Naive thymus-derived CD4-positive, alpha-beta T cell (primary cell): ENCODE measurements at regions of chr2 and their contacts with region 1.

Region 1: DNA sequence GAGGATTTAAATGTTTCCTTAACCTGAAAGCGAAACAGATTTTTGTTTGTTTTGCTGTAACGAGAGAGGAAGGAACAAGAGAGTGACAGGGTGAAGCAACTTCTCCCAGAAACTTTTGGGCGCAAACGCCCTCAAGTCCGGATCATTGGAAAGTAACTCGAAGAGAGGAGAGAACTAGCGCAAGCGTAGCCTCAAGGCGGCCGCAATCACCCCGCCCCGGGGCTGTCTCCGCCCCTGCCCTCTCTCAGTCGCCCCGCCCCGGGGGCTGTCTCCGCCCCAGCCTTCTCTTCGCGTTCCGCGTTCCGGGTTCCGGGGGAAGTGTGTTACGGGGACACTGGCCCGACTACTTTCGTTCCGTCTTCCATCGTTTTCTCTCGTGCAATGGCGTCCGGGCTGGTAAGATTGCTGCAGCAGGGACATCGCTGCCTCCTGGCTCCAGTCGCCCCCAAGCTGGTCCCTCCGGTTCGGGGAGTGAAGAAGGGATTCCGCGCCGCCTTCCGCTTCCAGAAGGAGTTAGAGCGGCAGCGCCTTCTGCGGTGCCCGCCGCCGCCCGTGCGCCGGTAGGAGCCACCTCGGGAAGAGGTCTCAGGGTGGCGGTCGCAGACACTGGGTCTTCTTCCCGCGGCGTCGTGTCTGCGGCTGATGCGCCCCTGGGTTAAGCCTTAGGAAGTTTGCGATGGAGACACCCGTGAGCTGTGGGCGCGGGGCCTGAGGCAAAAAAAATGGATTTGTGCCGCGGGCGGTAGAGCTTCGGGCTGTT is at the start of gene MRPL44:
- DNase-seq: peak; percentile 92 to 99 (median 96)
- ATAC-seq: peak; percentile 100
- H3K4me3 ChIP-seq: peak within 1 kb of the TSS; percentile 90
- H3K4me3 Mint-ChIP-seq: peak within 1 kb of the TSS; percentile 90 to 97 (median 94)
- H3K27ac ChIP-seq: peak within 1 kb of the TSS; percentile 81
- H3K27ac Mint-ChIP-seq: peak within 1 kb of the TSS; percentile 78 to 98 (median 95)
- H3K4me1 ChIP-seq: peaks cover 40 to 48% of the 10 kb centered on the region in 2 donors
- H3K4me1 Mint-ChIP-seq: peaks cover 33 to 70% (median 58%) of the 10 kb centered on the region in 7 donors
- H3K27me3 ChIP-seq: no peaks in the 10 kb centered on the region
- H3K27me3 Mint-ChIP-seq: no peaks in the 10 kb centered on the region
- total RNA-seq, gene MRPL44: 18.0 to 31.2 (median 26.8) TPM

Region 2: DNA sequence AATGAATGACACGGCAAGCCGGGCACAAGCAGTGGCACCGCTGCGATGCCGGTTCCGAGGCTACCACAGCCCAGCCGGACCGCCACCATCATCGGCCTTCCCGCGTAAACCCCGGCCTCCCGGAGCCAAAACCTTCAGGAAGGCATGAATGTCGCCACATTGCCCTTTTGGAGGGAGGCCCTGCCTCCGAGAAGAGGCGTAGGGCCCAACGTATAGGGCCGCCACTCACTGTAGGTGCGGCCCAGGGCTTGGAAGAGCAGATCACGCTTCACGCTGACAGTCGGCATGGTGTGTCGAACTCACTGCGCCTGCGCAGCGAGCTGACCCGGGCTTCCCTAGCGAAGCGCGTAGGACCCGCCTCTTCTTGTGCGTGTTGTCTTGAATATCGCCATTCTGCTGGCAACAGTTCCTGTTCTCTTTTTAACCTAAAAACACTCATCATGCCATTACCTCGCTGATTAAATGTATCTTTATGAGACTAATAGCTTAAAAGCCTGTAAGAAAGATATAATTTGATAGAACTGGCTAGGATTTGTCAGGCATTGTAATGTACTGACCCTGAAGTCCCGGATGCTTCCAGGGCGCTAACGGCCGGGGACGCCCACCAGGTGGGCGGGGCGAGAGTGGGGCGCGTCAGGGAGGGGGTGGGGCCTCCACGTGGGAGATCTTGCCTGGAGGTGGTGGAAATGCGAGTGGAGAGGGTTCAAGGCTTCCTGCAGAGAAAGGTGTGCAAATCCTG is 1301.3 kb before region 1 on chr2 and contains the start of gene FARSB:
- CTCF ChIA-PET with region 1: no interaction called
- POLR2A ChIA-PET with region 1: no interaction called
- intact Hi-C with region 1: loop called in 1 of 2 experiments (anchors 5 kb)
- DNase-seq: peak; percentile 86 to 98 (median 94)
- ATAC-seq: peak; percentile 96
- H3K4me3 ChIP-seq: peak within 1 kb of the TSS; percentile 82
- H3K4me3 Mint-ChIP-seq: peak within 1 kb of the TSS; percentile 95 to 100 (median 99)
- H3K27ac ChIP-seq: peak within 1 kb of the TSS; percentile 94
- H3K27ac Mint-ChIP-seq: peak within 1 kb of the TSS; percentile 98 to 100 (median 99)
- H3K4me1 ChIP-seq: peaks cover 18 to 20% of the 10 kb centered on the region in 2 donors
- H3K4me1 Mint-ChIP-seq: peaks cover 30 to 59% (median 45%) of the 10 kb centered on the region in 7 donors
- H3K27me3 ChIP-seq: no peaks in the 10 kb centered on the region
- H3K27me3 Mint-ChIP-seq: no peaks in the 10 kb centered on the region
- total RNA-seq, gene FARSB: 10.5 to 23.3 (median 13.8) TPM

Region 3: GRCh38 chr2:223837287-223838061 is 119.8 kb before region 1 on chr2 and contains the start of gene AP1S3:
- CTCF ChIA-PET with region 1: interaction called, 3 read pairs
- POLR2A ChIA-PET with region 1: no interaction called
- intact Hi-C with region 1: loop called (anchors 1 to 2 kb)
- DNase-seq: peak; percentile 30 to 75 (median 58)
- ATAC-seq: peak; percentile 88
- H3K4me3 ChIP-seq: peak within 1 kb of the TSS; percentile 69
- H3K4me3 Mint-ChIP-seq: peak within 1 kb of the TSS; percentile 87 to 97 (median 94)
- H3K27ac ChIP-seq: peak within 1 kb of the TSS; percentile 60
- H3K27ac Mint-ChIP-seq: peak within 1 kb of the TSS; percentile 36 to 84 (median 76)
- H3K4me1 ChIP-seq: no peaks in the 10 kb centered on the region
- H3K4me1 Mint-ChIP-seq: peaks cover 0 to 20% (median 12%) of the 10 kb centered on the region in 7 donors
- H3K27me3 ChIP-seq: no peaks in the 10 kb centered on the region
- H3K27me3 Mint-ChIP-seq: no peaks in the 10 kb centered on the region
- total RNA-seq, gene AP1S3: 0.54 to 8.2 (median 1.6) TPM

Region 4: DNA sequence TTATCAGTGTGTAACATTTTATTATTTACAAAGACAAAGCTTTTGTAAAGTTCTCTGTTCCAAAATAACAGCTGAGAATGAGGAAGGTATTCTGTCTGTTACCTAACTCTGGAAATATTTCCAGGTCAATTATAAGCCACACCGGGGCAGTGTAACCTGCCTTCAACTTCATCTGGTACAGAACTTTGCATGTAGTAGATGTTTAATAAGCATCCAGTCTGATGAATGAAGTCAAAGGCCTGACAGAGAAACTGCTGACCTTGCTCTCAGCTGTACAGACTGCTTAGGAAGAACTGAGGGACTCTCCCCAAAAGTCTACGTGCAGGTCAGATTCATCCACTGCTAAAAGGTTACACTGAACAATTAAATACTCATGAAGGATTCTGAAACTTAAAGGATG is 55.4 kb before region 1 on chr2:
- CTCF ChIA-PET with region 1: no interaction called
- POLR2A ChIA-PET with region 1: no interaction called
- intact Hi-C with region 1: no loop called
- DNase-seq: no peak
- ATAC-seq: no peak
- H3K4me3 ChIP-seq: no peak overlapping the region
- H3K4me3 Mint-ChIP-seq: no peak overlapping the region
- H3K27ac ChIP-seq: no peak overlapping the region
- H3K27ac Mint-ChIP-seq: no peak overlapping the region
- H3K4me1 ChIP-seq: no peaks in the 10 kb centered on the region
- H3K4me1 Mint-ChIP-seq: peaks cover 0 to 12% (median 0%) of the 10 kb centered on the region in 7 donors
- H3K27me3 ChIP-seq: no peaks in the 10 kb centered on the region
- H3K27me3 Mint-ChIP-seq: no peaks in the 10 kb centered on the region

Region 5: DNA sequence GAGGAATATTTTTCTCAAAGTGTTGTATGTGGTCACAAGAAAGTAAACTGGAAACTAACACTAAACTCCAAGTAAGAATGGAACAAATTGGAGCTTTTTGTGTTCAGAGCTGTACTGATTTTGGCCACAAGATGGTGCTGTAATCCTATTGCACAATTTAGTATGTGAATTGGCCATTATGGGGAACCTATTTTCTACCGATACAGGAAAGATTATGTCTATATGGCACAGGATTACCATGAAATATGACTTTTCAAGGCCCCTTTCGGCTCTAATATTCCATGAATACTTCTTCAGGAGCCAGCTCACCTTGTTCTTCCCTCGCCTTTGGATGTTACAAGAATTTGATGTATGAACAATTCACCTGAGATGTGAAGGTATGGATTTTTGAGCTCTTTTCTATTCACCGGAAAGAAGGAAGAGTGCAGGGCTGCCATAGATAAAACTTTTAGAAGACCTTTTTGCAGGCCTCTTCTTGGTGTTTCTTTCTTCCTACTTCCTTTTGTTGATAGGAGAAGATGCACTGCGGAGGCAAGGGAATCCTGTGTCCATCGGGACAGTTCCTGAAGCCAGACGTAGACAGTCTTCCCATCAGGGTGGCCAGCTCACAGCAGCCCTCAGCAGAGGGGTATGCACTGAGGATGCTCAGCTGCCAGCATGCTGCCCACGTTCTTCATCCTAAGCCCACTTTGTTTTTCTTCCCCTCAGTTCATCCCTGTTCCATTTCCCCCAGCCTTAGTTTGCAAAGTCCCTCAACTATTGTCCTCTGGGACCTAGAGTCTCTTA is 13.3 kb after region 1 on chr2:
- CTCF ChIA-PET with region 1: interaction called, 22 read pairs
- POLR2A ChIA-PET with region 1: interaction called, 10 read pairs
- intact Hi-C with region 1: no loop called
- DNase-seq: peak in 8 of 9 donors; percentile 27 to 62 (median 54)
- ATAC-seq: peak; percentile 87
- H3K4me3 ChIP-seq: no peak overlapping the region
- H3K4me3 Mint-ChIP-seq: no peak overlapping the region
- H3K27ac ChIP-seq: no peak overlapping the region
- H3K27ac Mint-ChIP-seq: peak overlapping the region in 1 of 9 donors; percentile 28
- H3K4me1 ChIP-seq: no peaks in the 10 kb centered on the region
- H3K4me1 Mint-ChIP-seq: peaks cover 0 to 14% (median 4%) of the 10 kb centered on the region in 7 donors
- H3K27me3 ChIP-seq: no peaks in the 10 kb centered on the region
- H3K27me3 Mint-ChIP-seq: no peaks in the 10 kb centered on the region

Region 6: GRCh38 chr2:224650815-224651439 is 693.7 kb after region 1 on chr2:
- CTCF ChIA-PET with region 1: no interaction called
- POLR2A ChIA-PET with region 1: no interaction called
- intact Hi-C with region 1: loop called in 1 of 2 experiments (anchors 1 kb)
- DNase-seq: peak in 7 of 9 donors; percentile 12 to 57 (median 47)
- ATAC-seq: peak; percentile 72
- H3K4me3 ChIP-seq: no peak overlapping the region
- H3K4me3 Mint-ChIP-seq: no peak overlapping the region
- H3K27ac ChIP-seq: no peak overlapping the region
- H3K27ac Mint-ChIP-seq: no peak overlapping the region
- H3K4me1 ChIP-seq: no peaks in the 10 kb centered on the region
- H3K4me1 Mint-ChIP-seq: peaks cover 0 to 11% (median 5%) of the 10 kb centered on the region in 7 donors
- H3K27me3 ChIP-seq: no peaks in the 10 kb centered on the region
- H3K27me3 Mint-ChIP-seq: peaks cover 0 to 7% (median 0%) of the 10 kb centered on the region in 5 donors

Region 7: GRCh38 chr2:225041851-225042799 is 1084.9 kb after region 1 on chr2 and contains the start of gene DOCK10:
- CTCF ChIA-PET with region 1: no interaction called
- POLR2A ChIA-PET with region 1: no interaction called
- intact Hi-C with region 1: loop called in 1 of 2 experiments (anchors 2 kb)
- DNase-seq: peak; percentile 38 to 60 (median 57)
- ATAC-seq: peak; percentile 67
- H3K4me3 ChIP-seq: peak within 1 kb of the TSS; percentile 85
- H3K4me3 Mint-ChIP-seq: peak within 1 kb of the TSS; percentile 93 to 100 (median 98)
- H3K27ac ChIP-seq: peak within 1 kb of the TSS; percentile 96
- H3K27ac Mint-ChIP-seq: peak within 1 kb of the TSS; percentile 92 to 99 (median 96)
- H3K4me1 ChIP-seq: peaks cover 31 to 41% of the 10 kb centered on the region in 2 donors
- H3K4me1 Mint-ChIP-seq: peaks cover 40 to 61% (median 55%) of the 10 kb centered on the region in 7 donors
- H3K27me3 ChIP-seq: no peaks in the 10 kb centered on the region
- H3K27me3 Mint-ChIP-seq: peaks cover 0 to 29% (median 0%) of the 10 kb centered on the region in 5 donors
- total RNA-seq, gene DOCK10: 200 to 275 (median 231) TPM